Ascending aorta (tissue), 2 donors: ENCODE measurements at regions of chr4 and their contacts with region 1.

Region 1: DNA sequence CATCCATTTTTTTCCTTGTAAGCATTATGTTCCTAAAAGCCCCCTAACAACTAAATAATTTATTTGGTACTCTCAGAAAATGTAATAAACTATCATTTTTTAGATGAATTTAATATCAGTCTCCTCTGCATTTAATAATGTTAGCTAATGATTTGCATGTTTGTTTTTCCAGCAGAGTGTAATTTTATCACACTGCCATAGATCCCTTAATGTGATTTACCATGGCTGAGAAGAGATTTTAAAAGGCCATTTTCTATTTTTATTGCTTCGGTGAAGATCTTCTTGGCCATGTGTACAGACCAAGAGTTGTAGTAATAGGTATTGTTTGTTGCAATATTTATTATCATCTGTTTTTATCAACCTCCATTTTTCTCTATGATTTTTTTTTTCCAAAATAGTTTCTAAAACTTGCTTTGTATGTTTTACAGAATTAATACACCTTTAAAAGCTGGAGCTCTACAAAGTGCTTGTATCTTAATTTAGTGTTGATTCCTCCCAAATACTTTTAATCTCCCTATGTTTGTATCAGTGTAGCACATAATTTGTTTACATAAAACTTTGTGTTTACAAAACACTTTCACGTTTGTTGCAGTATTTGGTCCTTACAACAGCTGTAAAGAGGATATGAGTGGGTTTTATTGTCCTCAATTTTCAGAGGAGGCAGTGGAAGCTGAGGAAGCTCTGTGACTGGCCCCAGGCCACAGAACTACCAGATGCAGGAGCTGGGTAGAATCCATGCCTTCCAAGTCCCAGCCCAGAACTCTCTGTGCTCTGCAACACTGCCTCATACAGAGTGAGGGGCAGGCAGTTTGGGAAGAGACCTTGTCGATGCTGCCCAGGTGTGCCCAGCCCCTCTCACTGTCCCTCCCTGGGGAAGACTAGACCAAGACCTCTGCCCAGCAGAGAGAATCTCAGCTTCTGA is 58.1 kb downstream of the FAM114A1 start:
- DNase-seq: no peak
- H3K4me3 ChIP-seq: no peak overlapping the region
- H3K27ac ChIP-seq: no peak overlapping the region
- H3K4me1 ChIP-seq: no peaks in the 10 kb centered on the region
- H3K27me3 ChIP-seq: no peaks in the 10 kb centered on the region
- CTCF ChIP-seq: no peak

Region 2: DNA sequence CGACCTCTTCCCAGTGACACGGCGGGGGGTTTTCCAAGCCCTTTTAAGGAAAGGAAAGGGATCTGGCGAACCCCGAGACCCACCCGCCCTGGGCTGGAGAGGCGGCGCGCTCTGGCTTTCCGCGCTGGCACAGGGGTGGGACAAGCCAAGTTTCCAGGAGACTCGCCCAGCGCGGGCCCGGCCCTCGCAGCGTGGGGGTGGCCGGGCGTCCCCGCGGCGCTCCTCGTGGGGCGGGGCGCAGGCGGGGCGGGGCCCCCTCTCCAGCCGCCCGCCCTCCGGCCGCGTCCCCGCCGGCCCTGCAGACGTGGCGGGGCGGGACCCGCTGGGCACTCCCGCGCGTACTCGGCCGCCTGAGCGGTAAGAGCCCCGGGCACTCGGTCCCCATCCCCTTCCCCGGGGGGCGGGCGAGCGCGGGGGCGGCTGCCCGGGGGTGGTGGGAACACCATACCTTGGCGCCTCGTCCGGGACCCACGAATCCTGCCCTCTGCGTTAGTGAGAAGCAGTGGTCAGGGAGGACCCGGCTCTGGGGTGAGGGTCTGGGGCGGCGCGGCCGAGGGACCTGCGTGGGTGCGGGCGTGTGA is 58.2 kb before region 1 on chr4 and contains the start of gene FAM114A1:
- intact Hi-C with region 1: no loop called
- DNase-seq: peak in 1 of 2 donors; percentile 89
- H3K4me3 ChIP-seq: peak within 1 kb of the TSS; percentile 74 to 83
- H3K27ac ChIP-seq: peak within 1 kb of the TSS; percentile 94 to 96
- H3K4me1 ChIP-seq: peaks cover 0 to 13% of the 10 kb centered on the region in 2 donors
- H3K27me3 ChIP-seq: no peaks in the 10 kb centered on the region
- CTCF ChIP-seq: no peak
- total RNA-seq, gene FAM114A1: 45.7 TPM

Region 3: DNA sequence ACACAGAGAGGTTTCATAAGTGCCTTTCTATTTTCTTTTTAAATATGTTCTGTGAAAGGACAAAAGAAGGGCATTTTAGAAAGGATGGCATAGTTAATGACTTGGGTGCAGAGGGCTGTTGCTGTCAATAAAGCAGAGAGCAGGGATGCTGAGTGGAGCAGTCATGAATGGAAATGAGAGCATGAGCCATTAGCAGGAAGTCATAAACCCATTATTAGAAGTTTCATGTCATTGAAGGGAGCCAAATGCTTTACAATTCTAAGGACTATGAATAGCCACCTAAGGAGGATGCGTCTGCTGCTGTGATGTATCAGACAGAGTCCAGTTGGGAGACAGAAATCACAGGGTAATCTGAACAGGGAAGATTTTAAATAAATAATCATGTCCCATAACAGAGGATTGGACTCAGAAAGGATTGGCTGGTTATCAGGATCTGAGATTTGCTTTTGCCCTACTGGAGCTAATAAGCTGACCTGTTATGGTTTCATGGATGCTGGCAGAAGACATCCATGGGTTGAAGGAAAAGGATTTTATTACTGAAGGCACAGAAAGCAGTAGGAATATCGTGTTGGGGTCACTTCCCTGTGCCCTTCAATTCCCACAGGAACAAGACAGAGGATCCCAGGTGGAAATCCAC is 209.0 kb after region 1 on chr4:
- intact Hi-C with region 1: loop called (anchors 10 kb)
- DNase-seq: no peak
- H3K4me3 ChIP-seq: no peak overlapping the region
- H3K27ac ChIP-seq: no peak overlapping the region
- H3K4me1 ChIP-seq: no peaks in the 10 kb centered on the region
- H3K27me3 ChIP-seq: no peaks in the 10 kb centered on the region
- CTCF ChIP-seq: no peak